ENCODE measurements at regions of chr5 and their contacts with region 1.

Region 1: DNA sequence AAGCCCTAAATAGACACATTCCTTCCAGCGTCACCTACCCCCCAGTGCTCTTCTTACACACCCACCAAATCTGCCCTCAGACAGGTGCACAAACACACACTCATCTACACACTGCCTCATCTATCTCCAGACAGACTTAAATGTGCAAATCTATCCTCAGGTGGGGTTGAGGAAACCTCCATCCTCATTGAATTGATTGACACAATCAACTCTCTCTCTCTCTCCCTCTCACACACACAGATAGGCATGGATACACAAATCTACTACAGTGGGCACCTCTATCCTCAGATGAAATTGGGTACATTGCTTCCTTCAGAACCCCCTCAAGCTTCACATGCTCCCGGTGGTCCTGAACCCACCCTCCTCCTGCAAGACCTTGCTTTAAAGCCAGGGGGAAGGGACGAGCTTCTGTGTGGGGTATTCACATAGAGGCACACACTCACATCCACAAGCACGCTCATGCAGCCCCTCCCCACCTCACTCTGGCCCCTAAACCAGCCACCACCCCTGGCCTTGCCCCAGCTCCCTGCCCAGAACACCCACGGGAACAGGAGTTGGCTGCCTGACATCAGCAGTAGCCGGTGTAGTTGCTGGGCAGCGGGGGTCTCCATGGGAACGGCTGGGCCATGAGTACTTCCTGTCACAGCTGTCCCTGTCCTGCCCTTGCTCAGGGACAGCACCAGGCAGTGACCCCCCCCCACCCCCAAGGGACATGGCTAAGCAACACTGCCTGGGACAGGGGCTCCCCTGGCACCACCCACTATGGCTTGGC is 22.8 kb downstream of the PCDH1 start:
- DNase-seq: peak; percentile 95
- H3K4me3 ChIP-seq: no peak overlapping the region
- H3K27ac ChIP-seq: peak overlapping the region in 1 of 2 experiments; percentile 23; a peak in 1 of 4 replicates
- H3K4me1 ChIP-seq: peaks cover 0 to 17% of the 10 kb centered on the region in 2 experiments; a peak in 1 of 4 replicates
- H3K27me3 ChIP-seq: peaks cover 8% of the 10 kb centered on the region; the same call in 1 of the 2 replicates
- CTCF ChIP-seq: no peak
- EP300 ChIP-seq: no peak
- RAD21 ChIP-seq: no peak

Region 2: DNA sequence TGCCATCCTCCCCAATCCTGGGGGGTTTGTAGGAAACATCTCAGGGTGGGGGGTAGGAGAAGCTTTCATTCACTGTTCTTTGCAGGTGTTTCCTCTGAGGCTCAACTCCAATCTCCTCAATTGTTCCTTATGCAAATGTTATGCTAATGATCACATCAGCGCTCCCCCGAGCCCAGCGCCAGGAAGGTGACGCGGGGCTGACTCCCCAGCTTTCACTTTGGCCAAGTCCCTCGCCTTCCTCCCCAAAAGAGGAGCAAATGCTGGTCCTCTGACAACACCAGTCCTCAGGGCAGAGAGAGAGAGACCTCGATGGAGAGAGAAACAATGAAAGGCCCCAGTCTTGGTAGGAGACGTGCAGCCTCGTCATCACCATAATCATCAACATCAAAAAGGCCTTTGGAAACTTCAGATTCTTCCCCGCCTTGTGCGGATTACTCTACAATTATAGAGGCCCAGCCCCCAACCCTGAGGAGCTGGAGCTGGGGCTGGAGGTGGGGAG is 16.4 kb before region 1 on chr5:
- CTCF ChIA-PET with region 1: no interaction called
- POLR2A ChIA-PET with region 1: no interaction called
- DNase-seq: no peak
- H3K4me3 ChIP-seq: no peak overlapping the region
- H3K27ac ChIP-seq: peak overlapping the region in 1 of 2 experiments; percentile 51; a peak in 1 of 4 replicates
- H3K4me1 ChIP-seq: peaks cover 0 to 78% of the 10 kb centered on the region in 2 experiments; a peak in 3 of 4 replicates
- H3K27me3 ChIP-seq: peaks cover 18% of the 10 kb centered on the region; the same call in 1 of the 2 replicates
- CTCF ChIP-seq: no peak
- EP300 ChIP-seq: no peak
- RAD21 ChIP-seq: no peak

Region 3: GRCh38 chr5:141866149-141867120 is 11.0 kb after region 1 on chr5:
- CTCF ChIA-PET with region 1: interaction called, 19 read pairs
- POLR2A ChIA-PET with region 1: interaction called, 3 read pairs
- DNase-seq: no peak
- H3K4me3 ChIP-seq: no peak overlapping the region
- H3K27ac ChIP-seq: no peak overlapping the region
- H3K4me1 ChIP-seq: peaks cover 0 to 9% of the 10 kb centered on the region in 2 experiments; a peak in 1 of 4 replicates
- H3K27me3 ChIP-seq: peaks cover 40% of the 10 kb centered on the region
- CTCF ChIP-seq: no peak
- EP300 ChIP-seq: no peak
- RAD21 ChIP-seq: no peak

Region 4: GRCh38 chr5:142032747-142033631 is 177.5 kb after region 1 on chr5:
- CTCF ChIA-PET with region 1: no interaction called
- POLR2A ChIA-PET with region 1: no interaction called
- DNase-seq: no peak
- H3K4me3 ChIP-seq: no peak overlapping the region
- H3K27ac ChIP-seq: no peak overlapping the region
- H3K4me1 ChIP-seq: peaks cover 0 to 2% of the 10 kb centered on the region in 2 experiments; a peak in 1 of 4 replicates
- H3K27me3 ChIP-seq: no peaks in the 10 kb centered on the region
- CTCF ChIP-seq: no peak
- EP300 ChIP-seq: no peak
- RAD21 ChIP-seq: no peak